ENCODE measurements at regions of chr13 and their contacts with region 1.

Region 1: GRCh38 chr13:84844473-84844872 is 954.7 kb downstream of the SLITRK6 start:
- DNase-seq: peak; percentile 32
- H3K4me3 ChIP-seq: no peak overlapping the region
- H3K27ac ChIP-seq: no peak overlapping the region
- H3K4me1 ChIP-seq: no peaks in the 10 kb centered on the region; a peak in 1 of 4 replicates
- H3K27me3 ChIP-seq: no peaks in the 10 kb centered on the region
- CTCF ChIP-seq: peak; percentile 67
- EP300 ChIP-seq: no peak
- RAD21 ChIP-seq: peak; percentile 87

Region 2: DNA sequence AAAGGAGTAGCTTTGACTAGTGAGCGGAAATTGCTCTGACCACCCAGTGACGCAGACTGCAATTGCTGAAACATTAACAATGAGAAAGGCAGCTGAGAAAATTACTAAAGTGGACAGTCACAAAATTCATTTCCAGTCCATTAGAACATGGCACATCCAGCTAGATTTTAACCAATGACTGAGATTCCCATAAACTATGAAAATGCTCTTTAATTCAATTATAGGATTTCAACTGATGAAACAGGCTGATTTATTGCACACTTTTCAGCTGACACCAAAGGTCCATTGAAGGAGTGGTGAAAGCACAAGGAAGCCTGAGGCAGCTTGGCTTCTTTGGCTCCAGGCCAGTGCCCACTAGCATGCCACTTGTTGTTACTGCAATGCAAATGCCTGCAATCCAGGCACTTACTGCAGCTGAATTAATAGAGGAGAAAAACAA is 21.3 kb after region 1 on chr13:
- CTCF ChIA-PET with region 1: interaction called, 17 read pairs
- POLR2A ChIA-PET with region 1: no interaction called
- DNase-seq: peak; percentile 28
- H3K4me3 ChIP-seq: no peak overlapping the region
- H3K27ac ChIP-seq: peak overlapping the region in 1 of 2 experiments; percentile 16; a peak in 1 of 4 replicates
- H3K4me1 ChIP-seq: peaks cover 4 to 8% of the 10 kb centered on the region in 2 experiments; a peak in 3 of 4 replicates
- H3K27me3 ChIP-seq: no peaks in the 10 kb centered on the region
- CTCF ChIP-seq: no peak
- EP300 ChIP-seq: peak in 1 of 2 experiments; percentile 44; a peak in 1 of 4 replicates
- RAD21 ChIP-seq: no peak

Region 3: GRCh38 chr13:84873951-84874350 is 29.5 kb after region 1 on chr13:
- CTCF ChIA-PET with region 1: interaction called, 13 read pairs
- POLR2A ChIA-PET with region 1: no interaction called
- DNase-seq: no peak
- H3K4me3 ChIP-seq: no peak overlapping the region
- H3K27ac ChIP-seq: no peak overlapping the region
- H3K4me1 ChIP-seq: no peaks in the 10 kb centered on the region
- H3K27me3 ChIP-seq: no peaks in the 10 kb centered on the region
- CTCF ChIP-seq: no peak
- EP300 ChIP-seq: no peak
- RAD21 ChIP-seq: no peak

Region 4: GRCh38 chr13:85535316-85536084 is 691.0 kb after region 1 on chr13:
- CTCF ChIA-PET with region 1: no interaction called
- POLR2A ChIA-PET with region 1: no interaction called
- DNase-seq: no peak
- H3K4me3 ChIP-seq: no peak overlapping the region
- H3K27ac ChIP-seq: no peak overlapping the region
- H3K4me1 ChIP-seq: no peaks in the 10 kb centered on the region
- H3K27me3 ChIP-seq: no peaks in the 10 kb centered on the region
- CTCF ChIP-seq: no peak
- EP300 ChIP-seq: no peak
- RAD21 ChIP-seq: no peak

Region 5: GRCh38 chr13:85799097-85799582 is 954.7 kb after region 1 on chr13 and contains the start of gene SLITRK6:
- CTCF ChIA-PET with region 1: interaction called, 10 read pairs
- POLR2A ChIA-PET with region 1: no interaction called
- DNase-seq: peak; percentile 9
- H3K4me3 ChIP-seq: peak within 1 kb of the TSS; percentile 60 to 67
- H3K27ac ChIP-seq: peak within 1 kb of the TSS; percentile 24 to 86; a peak in 3 of 4 replicates
- H3K4me1 ChIP-seq: peaks cover 3 to 4% of the 10 kb centered on the region in 2 experiments; a peak in 2 of 4 replicates
- H3K27me3 ChIP-seq: no peaks in the 10 kb centered on the region
- CTCF ChIP-seq: peak; percentile 35
- EP300 ChIP-seq: peak in 1 of 2 experiments; percentile 12; a peak in 1 of 4 replicates
- RAD21 ChIP-seq: peak; percentile 66
- polyA plus RNA-seq, gene SLITRK6: 5.2 and 6.7 TPM in 2 replicates